GM10248 (cell line): ENCODE measurements at regions of chr15 and their contacts with region 1.

Region 1: DNA sequence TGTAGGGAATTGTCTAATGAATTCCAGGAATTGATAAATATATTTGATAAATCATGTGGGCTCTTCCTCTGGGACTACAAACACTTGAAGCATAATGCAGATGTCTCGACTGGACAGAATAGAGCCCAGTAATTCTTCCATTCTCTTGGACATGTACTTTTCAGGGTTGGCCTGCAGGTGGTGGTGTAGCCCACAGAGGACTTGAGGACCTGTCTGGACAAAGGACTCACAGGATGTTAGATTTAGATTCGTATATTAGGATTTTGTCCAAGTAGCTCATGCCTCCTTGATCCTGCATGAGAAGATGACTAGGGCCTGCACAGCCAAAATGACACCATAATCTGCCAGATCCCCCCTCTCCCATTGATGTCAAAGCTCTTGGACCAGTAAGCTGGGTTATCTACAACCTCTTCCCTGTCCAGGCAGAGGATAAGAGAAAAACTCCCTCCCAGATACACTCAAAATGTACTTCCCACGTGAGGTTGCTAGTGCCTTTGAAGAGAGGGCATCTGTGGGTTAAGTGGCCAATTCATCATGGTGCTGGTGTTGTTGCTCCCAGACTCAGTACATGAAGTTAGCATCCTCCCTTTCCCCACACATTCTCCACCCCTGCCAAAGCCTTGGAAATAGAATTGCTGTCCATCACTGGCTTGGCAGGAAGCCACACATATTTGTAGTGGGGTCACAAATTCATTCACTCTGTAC is 88.6 kb upstream of the ZNF280D start:
- DNase-seq: peak; percentile 43
- CTCF ChIP-seq: peak; percentile 63

Region 2: DNA sequence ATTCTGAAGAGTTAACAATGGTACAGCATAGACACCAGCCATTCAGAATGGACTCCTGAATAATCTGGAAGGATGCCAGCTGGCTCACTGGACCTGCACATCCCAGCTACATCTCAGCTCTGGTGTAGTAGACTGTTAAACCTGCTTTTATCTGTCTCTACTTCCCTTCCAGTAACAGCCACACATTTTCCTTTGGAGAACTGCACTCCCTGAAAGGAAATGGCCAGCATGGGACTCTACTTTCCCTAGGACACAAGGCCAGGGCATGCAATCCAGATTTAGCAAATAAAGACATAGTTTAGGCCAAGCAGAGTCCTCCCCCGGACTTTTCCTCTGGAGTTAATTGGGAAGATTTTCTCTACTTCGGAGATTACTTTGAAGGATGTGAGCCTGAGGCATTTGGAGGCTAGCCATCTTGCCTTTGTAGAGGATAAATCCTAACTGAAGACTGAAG is 13.9 kb after region 1 on chr15:
- CTCF ChIA-PET with region 1: interaction called, 30 read pairs
- POLR2A ChIA-PET with region 1: no interaction called
- DNase-seq: no peak
- CTCF ChIP-seq: no peak

Region 3: DNA sequence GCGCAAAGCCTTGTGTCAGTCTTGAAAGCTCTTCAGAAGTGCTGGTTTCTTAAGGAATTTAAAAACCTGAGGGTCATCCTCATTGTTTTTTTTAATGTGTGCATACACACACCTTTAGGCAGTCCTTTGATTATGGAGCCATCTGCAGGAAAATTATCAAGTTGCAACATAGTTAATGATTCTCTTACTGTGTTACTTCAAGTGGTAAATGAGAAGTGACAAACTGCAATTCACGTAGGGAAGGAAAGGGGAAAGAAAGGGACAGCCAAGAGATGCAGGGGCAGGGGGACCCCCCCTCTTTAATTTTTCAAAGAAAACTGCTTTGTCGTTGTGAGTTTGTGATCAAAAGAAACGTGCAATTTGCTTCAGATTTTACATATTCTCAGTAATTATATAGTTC is 392.0 kb after region 1 on chr15:
- CTCF ChIA-PET with region 1: interaction called, 13 read pairs
- POLR2A ChIA-PET with region 1: no interaction called
- DNase-seq: peak; percentile 14
- CTCF ChIP-seq: peak; percentile 52